ENCODE measurements at regions of chr1 and their contacts with region 1.

Region 1: GRCh38 chr1:185044981-185045813 is at the start of gene RNF2:
- H3K4me3 Mint-ChIP-seq: peak within 1 kb of the TSS; percentile 88
- H3K27ac Mint-ChIP-seq: peak within 1 kb of the TSS; percentile 89
- H3K4me1 Mint-ChIP-seq: peaks cover 31% of the 10 kb centered on the region
- H3K27me3 Mint-ChIP-seq: no peaks in the 10 kb centered on the region

Region 2: GRCh38 chr1:185017326-185017725 is 27.9 kb before region 1 on chr1:
- intact Hi-C with region 1: loop called (anchors 2 kb)
- H3K4me3 Mint-ChIP-seq: no peak overlapping the region
- H3K27ac Mint-ChIP-seq: peak overlapping the region; percentile 49
- H3K4me1 Mint-ChIP-seq: peaks cover 30% of the 10 kb centered on the region
- H3K27me3 Mint-ChIP-seq: no peaks in the 10 kb centered on the region

Region 3: GRCh38 chr1:185033686-185034085 is 11.5 kb before region 1 on chr1:
- intact Hi-C with region 1: no loop called
- H3K4me3 Mint-ChIP-seq: no peak overlapping the region
- H3K27ac Mint-ChIP-seq: no peak overlapping the region
- H3K4me1 Mint-ChIP-seq: no peaks in the 10 kb centered on the region
- H3K27me3 Mint-ChIP-seq: no peaks in the 10 kb centered on the region

Region 4: GRCh38 chr1:185238447-185238846 is 193.2 kb after region 1 on chr1:
- intact Hi-C with region 1: no loop called
- H3K4me3 Mint-ChIP-seq: no peak overlapping the region
- H3K27ac Mint-ChIP-seq: no peak overlapping the region
- H3K4me1 Mint-ChIP-seq: no peaks in the 10 kb centered on the region
- H3K27me3 Mint-ChIP-seq: no peaks in the 10 kb centered on the region

Measured in dendritic cell treated with granulocyte-macrophage colony-stimulating factor and Interleukin-4, amounts not matched to agents 40 ng/mL and 50 ng/mL, for 4 days (primary cell).